ENCODE measurements at regions of chr17 and their contacts with region 1.

Region 1: DNA sequence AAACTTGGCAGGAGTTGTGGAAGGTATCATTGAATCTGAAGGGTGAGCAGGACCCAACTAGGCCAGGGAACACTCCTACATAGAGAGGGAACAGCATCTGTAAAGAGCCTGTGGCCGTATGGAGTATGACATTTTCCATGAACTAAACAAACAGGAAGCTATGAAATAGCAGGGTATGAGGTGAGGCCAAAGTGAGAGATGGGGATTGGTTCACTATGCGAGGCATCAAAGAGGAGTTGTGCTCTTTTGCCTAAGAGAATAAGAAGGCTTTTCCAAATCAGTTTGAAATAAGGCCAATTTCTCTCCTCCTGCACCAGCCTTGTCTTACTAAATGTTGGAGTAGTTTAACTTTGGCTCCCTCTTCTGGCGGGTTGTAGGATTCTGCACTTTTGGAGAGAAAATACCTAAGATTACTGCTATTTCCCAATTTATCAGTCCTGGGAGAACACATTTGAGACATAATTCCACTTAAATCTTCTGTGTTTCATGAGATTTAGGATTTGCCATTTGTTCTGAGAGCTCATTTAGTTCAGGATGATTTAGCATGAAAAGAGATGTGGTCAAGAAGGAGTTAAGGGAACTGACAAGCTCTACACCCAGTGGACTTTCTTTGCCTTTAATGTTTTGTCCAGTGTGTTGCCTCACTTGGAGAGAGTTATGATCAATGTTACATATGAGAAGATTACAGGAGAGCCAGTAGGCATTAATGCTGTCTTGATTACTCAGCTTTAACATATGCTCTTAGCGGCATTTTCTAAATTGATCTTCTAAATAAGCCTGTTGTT is 55.4 kb downstream of the TNRC6C start:
- DNase-seq: no peak
- ATAC-seq: peak; percentile 60 to 75 (median 70)
- H3K4me3 ChIP-seq: no peak overlapping the region
- H3K27ac ChIP-seq: peak overlapping the region; percentile 17
- H3K4me1 ChIP-seq: peaks cover 3% of the 10 kb centered on the region
- H3K27me3 ChIP-seq: no peaks in the 10 kb centered on the region
- CTCF ChIP-seq: peak; percentile 86

Region 2: DNA sequence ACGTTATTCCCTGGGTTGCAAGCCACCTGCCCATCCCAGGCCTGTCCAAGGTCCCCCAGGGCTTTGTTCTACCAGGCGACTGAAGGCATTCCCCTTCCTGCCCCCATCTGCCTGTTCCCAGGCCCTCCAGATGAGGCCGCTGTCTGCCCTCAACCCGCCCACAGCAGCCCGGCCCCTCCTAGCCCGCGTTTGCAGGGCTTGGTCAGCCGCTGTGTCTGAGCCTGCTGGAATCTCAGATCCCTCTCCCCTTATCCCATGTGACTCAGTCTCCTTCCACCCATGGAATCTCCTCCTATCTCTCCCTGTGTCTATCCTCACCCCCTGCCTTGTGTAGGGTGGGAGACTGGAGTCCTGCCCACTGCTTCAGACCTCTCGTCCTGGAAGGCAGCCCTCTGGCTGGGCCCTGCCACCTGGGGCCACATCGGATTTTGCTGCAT is 241.4 kb before region 1 on chr17:
- intact Hi-C with region 1: loop called in 1 of 2 experiments (anchors 2 kb)
- DNase-seq: peak; percentile 57 to 73
- ATAC-seq: peak; percentile 64 to 84 (median 75)
- H3K4me3 ChIP-seq: no peak overlapping the region
- H3K27ac ChIP-seq: no peak overlapping the region
- H3K4me1 ChIP-seq: no peaks in the 10 kb centered on the region
- H3K27me3 ChIP-seq: no peaks in the 10 kb centered on the region
- CTCF ChIP-seq: peak; percentile 40

Region 3: DNA sequence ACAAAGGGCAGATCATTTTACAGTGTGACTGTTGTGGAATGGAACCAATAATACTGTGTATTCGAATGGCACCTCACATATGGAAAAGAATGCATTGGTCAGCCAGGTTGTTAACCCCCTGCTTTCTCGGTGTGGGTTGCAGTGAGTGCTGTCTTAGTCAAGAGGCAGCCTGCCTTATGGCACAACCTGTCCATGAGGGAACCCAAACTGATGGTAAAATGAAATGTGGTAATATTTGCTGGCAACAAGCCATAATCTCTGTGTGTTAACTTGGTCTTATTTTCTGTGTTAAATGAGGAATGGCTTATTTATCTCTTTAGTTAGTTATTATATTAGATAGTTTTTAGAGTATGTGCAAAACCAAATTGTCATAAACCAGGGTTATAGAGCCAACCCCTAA is 33.0 kb after region 1 on chr17:
- intact Hi-C with region 1: no loop called
- DNase-seq: no peak
- ATAC-seq: peak; percentile 59 to 71 (median 60)
- H3K4me3 ChIP-seq: peak overlapping the region; percentile 31
- H3K27ac ChIP-seq: peak overlapping the region; percentile 91
- H3K4me1 ChIP-seq: peaks cover 44% of the 10 kb centered on the region
- H3K27me3 ChIP-seq: no peaks in the 10 kb centered on the region
- CTCF ChIP-seq: no peak

Measured in psoas muscle (tissue), 8 donors.